ENCODE measurements at regions of chr1 and their contacts with region 1.

Region 1: DNA sequence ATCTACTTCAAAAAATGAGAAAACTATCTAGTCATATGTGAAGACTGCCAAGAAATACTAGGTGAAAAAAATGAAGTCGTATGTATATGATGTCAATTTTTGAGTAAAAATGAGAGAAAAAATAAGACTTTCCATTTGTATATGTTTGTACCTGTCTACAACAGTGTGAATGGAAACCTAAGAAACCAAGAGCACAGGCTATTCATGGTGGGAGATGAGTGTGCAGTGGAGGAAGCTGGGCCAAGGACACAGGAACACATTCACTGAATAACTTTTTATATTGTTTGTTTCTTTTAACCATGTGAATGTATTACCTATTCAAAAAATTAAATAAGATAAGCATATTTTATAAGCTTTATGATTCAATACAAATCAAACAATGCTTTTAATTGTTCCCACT is 67.0 kb downstream of the ERO1B start:
- DNase-seq: peak; percentile 4

Region 2: DNA sequence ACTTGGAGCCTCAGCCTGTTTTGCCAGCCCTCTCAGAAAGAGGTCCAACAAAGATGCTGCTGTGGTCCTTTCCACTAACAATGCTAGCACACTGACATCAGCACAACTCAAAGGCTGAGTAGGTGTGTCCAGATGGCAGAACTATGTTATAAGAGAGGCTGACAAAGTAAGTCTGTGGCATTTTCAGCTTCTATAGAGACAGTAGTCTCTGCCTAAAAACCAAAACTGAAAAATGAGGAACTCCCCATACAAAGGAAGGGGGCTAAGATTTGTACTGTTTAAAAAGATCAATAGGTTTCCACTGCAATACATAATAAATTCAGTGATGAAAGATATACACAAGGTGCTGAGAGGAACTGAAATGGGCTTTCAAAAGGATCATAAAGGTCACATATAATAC is 54.7 kb after region 1 on chr1:
- in situ Hi-C with region 1: loop called (anchors 10 kb)
- DNase-seq: no peak

Region 3: GRCh38 chr1:236377832-236378535 is 163.2 kb after region 1 on chr1:
- in situ Hi-C with region 1: no loop called
- DNase-seq: no peak